Motor neuron (in vitro differentiated cells): ENCODE measurements at regions of chr5 and their contacts with region 1.

Region 1: GRCh38 chr5:31809050-31809870 is 170.3 kb downstream of the PDZD2 start:
- ATAC-seq: peak; percentile 85 to 99 (median 94)
- H3K4me3 ChIP-seq: no peak overlapping the region
- H3K27ac ChIP-seq: no peak overlapping the region
- H3K4me1 ChIP-seq: no peaks in the 10 kb centered on the region

Region 2: GRCh38 chr5:31574772-31575171 is 234.5 kb before region 1 on chr5:
- in situ Hi-C with region 1: loop called in 3 of 9 experiments (anchors 5 to 25 kb)
- ATAC-seq: peak in 2 of 8 experiments; percentile 17 to 34
- H3K4me3 ChIP-seq: no peak overlapping the region
- H3K27ac ChIP-seq: no peak overlapping the region
- H3K4me1 ChIP-seq: no peaks in the 10 kb centered on the region

Region 3: GRCh38 chr5:31581498-31582099 is 227.7 kb before region 1 on chr5:
- in situ Hi-C with region 1: loop called in 4 of 9 experiments (anchors 5 to 25 kb)
- ATAC-seq: peak in 1 of 8 experiments; percentile 17
- H3K4me3 ChIP-seq: no peak overlapping the region
- H3K27ac ChIP-seq: no peak overlapping the region
- H3K4me1 ChIP-seq: no peaks in the 10 kb centered on the region

Region 4: DNA sequence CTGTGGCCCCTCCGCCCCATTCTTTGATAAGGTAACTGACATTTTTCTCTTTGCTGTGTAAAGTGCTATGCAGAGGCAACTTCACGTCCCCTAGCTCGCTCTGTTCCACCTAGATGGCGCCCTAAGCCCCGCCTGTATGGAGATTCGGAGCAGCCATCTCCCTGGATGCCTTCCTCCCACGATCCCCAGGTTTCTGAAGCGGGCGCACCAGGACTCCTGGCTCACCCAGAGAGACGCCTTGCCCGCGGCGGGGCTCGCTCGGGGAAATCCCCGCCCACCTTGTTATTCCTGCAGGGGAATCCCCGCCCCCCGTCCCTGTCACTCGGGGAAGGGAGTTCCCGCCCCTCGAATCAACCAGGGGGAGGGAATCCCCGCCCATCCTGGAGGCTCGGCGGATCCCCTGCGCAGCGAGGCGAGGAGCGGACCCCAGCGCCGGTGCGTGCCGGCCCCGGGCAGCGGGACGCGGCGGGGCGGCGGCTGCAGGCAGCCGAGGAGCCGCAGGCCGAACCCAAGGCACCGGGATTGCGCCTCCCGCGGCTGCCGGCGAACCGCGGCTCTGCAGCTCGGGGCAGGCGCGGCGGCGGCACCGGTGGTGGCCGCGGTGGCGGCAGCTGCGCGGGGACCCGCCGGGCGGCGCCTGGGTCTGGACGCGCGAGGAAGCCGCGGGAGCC is 170.4 kb before region 1 on chr5 and contains the start of gene PDZD2:
- in situ Hi-C with region 1: no loop called
- ATAC-seq: peak; percentile 86 to 92 (median 90)
- H3K4me3 ChIP-seq: peak within 1 kb of the TSS; percentile 46 to 94 (median 52)
- H3K27ac ChIP-seq: peak within 1 kb of the TSS; percentile 5 to 41
- H3K4me1 ChIP-seq: peaks cover 4 to 20% of the 10 kb centered on the region in 2 donors
- total RNA-seq, gene PDZD2: 1.6 to 6.9 (median 3.2) TPM

Region 5: DNA sequence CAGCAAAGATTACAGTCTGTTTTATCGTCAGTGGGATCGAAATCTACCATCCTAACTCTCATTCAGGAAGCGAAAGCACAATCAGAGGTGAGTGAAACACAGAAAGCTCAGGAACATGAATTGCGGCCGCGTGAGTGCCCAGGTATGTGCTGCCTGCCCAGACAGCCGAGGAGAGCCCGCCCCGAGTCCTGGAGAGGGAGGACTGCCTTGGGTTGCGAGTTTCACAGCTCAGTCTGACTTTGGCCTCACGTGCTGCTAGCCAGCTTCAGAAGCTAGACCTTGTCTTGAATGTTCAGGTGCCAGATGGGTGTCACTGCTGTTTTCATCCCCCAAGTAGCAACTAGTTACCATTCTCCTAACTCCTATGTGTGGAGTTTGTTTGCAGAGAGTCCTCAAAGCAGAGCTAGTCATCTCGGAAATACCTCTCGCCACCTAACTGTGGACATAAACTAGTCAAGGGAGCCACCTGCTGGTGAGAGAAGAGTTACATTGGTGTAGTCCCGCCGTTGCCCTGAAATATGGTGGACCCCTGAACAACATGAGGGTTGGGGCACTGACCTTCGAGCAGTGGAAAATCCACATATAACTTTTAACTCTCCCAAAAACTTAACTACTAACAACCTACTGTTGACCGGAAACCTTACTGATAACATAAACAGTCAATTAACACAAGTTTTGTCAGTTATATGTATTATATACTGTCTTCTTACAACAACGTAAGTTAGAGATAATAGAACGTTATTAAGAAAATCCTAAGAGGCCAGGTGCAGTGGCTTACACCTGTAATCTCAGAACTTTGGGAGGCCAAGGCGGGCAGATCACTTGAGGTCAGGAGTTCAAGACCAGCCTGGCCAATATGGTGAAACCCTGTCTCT is 283.9 kb after region 1 on chr5:
- in situ Hi-C with region 1: loop called in 3 of 9 experiments (anchors 25 kb)
- ATAC-seq: peak; percentile 77 to 94 (median 86)
- H3K4me3 ChIP-seq: no peak overlapping the region
- H3K27ac ChIP-seq: no peak overlapping the region
- H3K4me1 ChIP-seq: peaks cover 3 to 13% of the 10 kb centered on the region in 2 donors

Region 6: GRCh38 chr5:32828492-32828891 is 1019.2 kb after region 1 on chr5:
- in situ Hi-C with region 1: no loop called
- ATAC-seq: no peak
- H3K4me3 ChIP-seq: no peak overlapping the region
- H3K27ac ChIP-seq: no peak overlapping the region
- H3K4me1 ChIP-seq: no peaks in the 10 kb centered on the region

Region 7: GRCh38 chr5:33401482-33402390 is 1592.5 kb after region 1 on chr5:
- in situ Hi-C with region 1: no loop called
- ATAC-seq: no peak
- H3K4me3 ChIP-seq: no peak overlapping the region
- H3K27ac ChIP-seq: no peak overlapping the region
- H3K4me1 ChIP-seq: no peaks in the 10 kb centered on the region